GM12878 (cell line): ENCODE measurements at regions of chr12 and their contacts with region 1.

Region 1: DNA sequence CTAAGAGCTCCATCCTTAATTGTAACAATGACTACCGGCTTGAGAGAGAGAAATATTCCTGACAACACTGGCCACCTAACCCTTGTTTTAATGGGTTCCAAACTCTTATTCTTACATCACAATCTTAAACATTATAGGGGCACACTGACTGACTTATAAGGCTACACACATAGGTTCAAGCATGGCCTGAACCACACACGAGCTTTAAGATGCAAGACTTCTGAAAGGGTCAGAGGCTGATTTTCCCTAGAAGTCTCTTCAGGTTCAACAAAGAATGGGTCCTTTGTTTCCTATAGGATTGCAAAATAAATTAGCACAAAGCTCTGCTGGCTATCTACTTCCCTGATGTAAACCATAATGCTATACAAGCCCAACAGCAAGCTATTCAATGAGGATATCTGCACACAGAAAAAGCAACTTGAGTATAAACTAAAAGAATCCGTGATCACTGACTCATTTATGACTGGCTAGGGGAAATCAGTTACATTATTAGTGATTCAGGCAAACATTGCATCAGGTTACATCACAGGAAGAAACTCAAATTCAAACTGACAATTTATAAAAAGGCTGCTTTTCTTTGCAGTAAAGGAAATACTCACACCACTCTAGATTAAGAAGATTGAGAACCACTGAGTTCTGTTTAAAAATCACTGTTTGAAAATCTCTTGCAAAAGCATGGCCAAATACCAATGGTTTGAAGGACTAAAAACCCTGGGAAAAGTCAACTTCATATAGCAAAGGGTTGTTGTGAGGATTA is 8.5 kb downstream of the BTG1 start:
- DNase-seq: no peak
- ATAC-seq: peak; percentile 7
- H3K4me3 ChIP-seq: peak overlapping the region; percentile 89
- H3K27ac ChIP-seq: peak overlapping the region; percentile 85
- H3K4me1 ChIP-seq: peaks cover 13% of the 10 kb centered on the region; the same call in 1 of the 2 replicates
- H3K27me3 ChIP-seq: no peaks in the 10 kb centered on the region
- CTCF ChIP-seq: no peak
- EP300 ChIP-seq: no peak
- POLR2A ChIP-seq: no peak
- RAD21 ChIP-seq: no peak

Region 2: GRCh38 chr12:91811481-91812287 is 325.5 kb before region 1 on chr12:
- CTCF ChIA-PET with region 1: interaction called, 29 read pairs
- POLR2A ChIA-PET with region 1: no interaction called
- RAD21 ChIA-PET with region 1: interaction called, 16 read pairs
- SMC1A ChIA-PET with region 1: interaction called, 20 read pairs
- in situ Hi-C with region 1: loop called (anchors 5 kb)
- intact Hi-C with region 1: loop called (anchors 2 kb)
- DNase-seq: peak; percentile 40
- ATAC-seq: peak; percentile 95
- H3K4me3 ChIP-seq: no peak overlapping the region
- H3K27ac ChIP-seq: no peak overlapping the region
- H3K4me1 ChIP-seq: no peaks in the 10 kb centered on the region
- H3K27me3 ChIP-seq: no peaks in the 10 kb centered on the region
- CTCF ChIP-seq: peak; percentile 68 to 86 (median 79)
- EP300 ChIP-seq: no peak
- POLR2A ChIP-seq: no peak
- RAD21 ChIP-seq: peak; percentile 87

Region 3: GRCh38 chr12:92041742-92042141 is 95.4 kb before region 1 on chr12:
- CTCF ChIA-PET with region 1: interaction called, 3 read pairs
- POLR2A ChIA-PET with region 1: interaction called, 5 read pairs
- RAD21 ChIA-PET with region 1: interaction called, 71 read pairs
- SMC1A ChIA-PET with region 1: interaction called, 11 read pairs
- in situ Hi-C with region 1: no loop called
- intact Hi-C with region 1: loop called (anchors 5 kb)
- DNase-seq: no peak
- ATAC-seq: peak; percentile 27
- H3K4me3 ChIP-seq: no peak overlapping the region
- H3K27ac ChIP-seq: no peak overlapping the region
- H3K4me1 ChIP-seq: peaks cover 10% of the 10 kb centered on the region
- H3K27me3 ChIP-seq: no peaks in the 10 kb centered on the region
- CTCF ChIP-seq: no peak
- EP300 ChIP-seq: no peak
- POLR2A ChIP-seq: no peak
- RAD21 ChIP-seq: no peak

Region 4: GRCh38 chr12:92078167-92079053 is 58.7 kb before region 1 on chr12:
- CTCF ChIA-PET with region 1: no interaction called
- POLR2A ChIA-PET with region 1: interaction called, 3 read pairs
- RAD21 ChIA-PET with region 1: interaction called, 4 read pairs
- SMC1A ChIA-PET with region 1: interaction called, 33 read pairs
- in situ Hi-C with region 1: no loop called
- intact Hi-C with region 1: no loop called
- DNase-seq: no peak
- ATAC-seq: peak; percentile 7
- H3K4me3 ChIP-seq: no peak overlapping the region
- H3K27ac ChIP-seq: no peak overlapping the region
- H3K4me1 ChIP-seq: peaks cover 36% of the 10 kb centered on the region
- H3K27me3 ChIP-seq: no peaks in the 10 kb centered on the region
- CTCF ChIP-seq: no peak
- EP300 ChIP-seq: no peak
- POLR2A ChIP-seq: no peak
- RAD21 ChIP-seq: no peak

Region 5: GRCh38 chr12:92363295-92364146 is 226.4 kb after region 1 on chr12:
- CTCF ChIA-PET with region 1: interaction called, 5 read pairs
- POLR2A ChIA-PET with region 1: interaction called, 10 read pairs
- RAD21 ChIA-PET with region 1: interaction called, 24 read pairs
- SMC1A ChIA-PET with region 1: interaction called, 8 read pairs
- in situ Hi-C with region 1: no loop called
- intact Hi-C with region 1: loop called (anchors 2 kb)
- DNase-seq: peak; percentile 96
- ATAC-seq: peak; percentile 82
- H3K4me3 ChIP-seq: peak overlapping the region; percentile 62
- H3K27ac ChIP-seq: peak overlapping the region; percentile 99
- H3K4me1 ChIP-seq: peaks cover 17% of the 10 kb centered on the region; the same call in 1 of the 2 replicates
- H3K27me3 ChIP-seq: no peaks in the 10 kb centered on the region
- CTCF ChIP-seq: no peak
- EP300 ChIP-seq: peak; percentile 60 to 79; a peak in 3 of 4 replicates
- POLR2A ChIP-seq: peak; percentile 83
- RAD21 ChIP-seq: peak; percentile 12; the same call in 1 of the 2 replicates

Region 6: GRCh38 chr12:92561543-92561899 is 424.4 kb after region 1 on chr12:
- CTCF ChIA-PET with region 1: interaction called, 5 read pairs
- POLR2A ChIA-PET with region 1: interaction called, 9 read pairs
- RAD21 ChIA-PET with region 1: interaction called, 19 read pairs
- SMC1A ChIA-PET with region 1: interaction called, 14 read pairs
- in situ Hi-C with region 1: no loop called
- intact Hi-C with region 1: no loop called
- DNase-seq: no peak
- ATAC-seq: peak; percentile 13
- H3K4me3 ChIP-seq: peak overlapping the region; percentile 50; the same call in 1 of the 2 replicates
- H3K27ac ChIP-seq: peak overlapping the region; percentile 36
- H3K4me1 ChIP-seq: peaks cover 32% of the 10 kb centered on the region
- H3K27me3 ChIP-seq: no peaks in the 10 kb centered on the region
- CTCF ChIP-seq: no peak
- EP300 ChIP-seq: peak in 1 of 2 experiments; percentile 35; a peak in 1 of 4 replicates
- POLR2A ChIP-seq: no peak
- RAD21 ChIP-seq: no peak